ENCODE measurements at regions of chr19 and their contacts with region 1.

Region 1: GRCh38 chr19:47273313-47273977 is 1.2 kb upstream of the INAFM1 start:
- DNase-seq: peak; percentile 87 to 92 (median 89)
- H3K4me3 ChIP-seq: peak overlapping the region; percentile 89 to 100
- H3K4me3 Mint-ChIP-seq: peak overlapping the region; percentile 92 to 99 (median 97)
- H3K27ac ChIP-seq: peak overlapping the region; percentile 96
- H3K27ac Mint-ChIP-seq: peak overlapping the region; percentile 97 to 99 (median 99)
- H3K4me1 ChIP-seq: peaks cover 19% of the 10 kb centered on the region
- H3K4me1 Mint-ChIP-seq: peaks cover 15 to 33% (median 19%) of the 10 kb centered on the region in 4 donors
- H3K27me3 ChIP-seq: no peaks in the 10 kb centered on the region
- H3K27me3 Mint-ChIP-seq: no peaks in the 10 kb centered on the region

Region 2: GRCh38 chr19:46600384-46601317 is 672.8 kb before region 1 on chr19:
- CTCF ChIA-PET with region 1: no interaction called
- POLR2A ChIA-PET with region 1: interaction called, 11 read pairs
- intact Hi-C with region 1: no loop called
- DNase-seq: peak; percentile 97 to 99 (median 98)
- H3K4me3 ChIP-seq: peak overlapping the region; percentile 80 to 90
- H3K4me3 Mint-ChIP-seq: peak overlapping the region; percentile 98 to 99 (median 99)
- H3K27ac ChIP-seq: peak overlapping the region; percentile 97
- H3K27ac Mint-ChIP-seq: peak overlapping the region; percentile 100
- H3K4me1 ChIP-seq: peaks cover 36% of the 10 kb centered on the region
- H3K4me1 Mint-ChIP-seq: peaks cover 10 to 46% (median 30%) of the 10 kb centered on the region in 4 donors
- H3K27me3 ChIP-seq: no peaks in the 10 kb centered on the region
- H3K27me3 Mint-ChIP-seq: peaks cover 0 to 4% of the 10 kb centered on the region in 2 donors

Region 3: DNA sequence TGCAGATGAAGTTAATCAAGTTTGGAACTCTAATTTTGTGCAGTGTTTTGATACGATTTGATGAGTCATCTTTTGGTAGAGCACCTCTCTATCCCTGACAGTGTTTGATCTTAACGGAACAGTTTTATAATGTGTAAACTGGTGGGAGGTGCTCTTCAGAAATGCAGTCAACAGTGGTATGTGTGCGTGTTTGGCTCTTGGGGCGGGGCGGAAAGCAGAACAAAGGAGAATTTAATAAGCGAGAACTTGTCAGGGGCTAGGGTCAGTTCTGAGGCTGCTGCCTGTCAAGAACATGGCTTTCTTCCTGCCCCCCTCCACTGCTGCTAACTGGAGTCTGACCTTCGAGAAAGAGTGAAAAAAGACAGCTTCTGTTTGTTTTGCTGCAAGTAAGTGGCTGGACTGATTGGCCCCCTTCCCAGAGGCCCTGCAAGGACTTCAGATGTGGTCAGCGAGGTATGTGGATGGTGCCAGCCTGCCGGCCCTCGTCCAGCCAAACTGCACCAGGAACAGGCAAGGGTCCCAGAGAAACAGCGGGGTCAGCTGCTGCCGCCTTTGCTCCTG is 83.2 kb before region 1 on chr19:
- CTCF ChIA-PET with region 1: no interaction called
- POLR2A ChIA-PET with region 1: interaction called, 10 read pairs
- intact Hi-C with region 1: no loop called
- DNase-seq: peak; percentile 60 to 78 (median 64)
- H3K4me3 ChIP-seq: no peak overlapping the region
- H3K4me3 Mint-ChIP-seq: peak overlapping the region in 7 of 8 donors; percentile 5 to 81 (median 56)
- H3K27ac ChIP-seq: peak overlapping the region; percentile 47
- H3K27ac Mint-ChIP-seq: peak overlapping the region; percentile 62 to 94 (median 85)
- H3K4me1 ChIP-seq: peaks cover 72% of the 10 kb centered on the region
- H3K4me1 Mint-ChIP-seq: peaks cover 40 to 71% (median 48%) of the 10 kb centered on the region in 4 donors
- H3K27me3 ChIP-seq: no peaks in the 10 kb centered on the region
- H3K27me3 Mint-ChIP-seq: no peaks in the 10 kb centered on the region

Region 4: DNA sequence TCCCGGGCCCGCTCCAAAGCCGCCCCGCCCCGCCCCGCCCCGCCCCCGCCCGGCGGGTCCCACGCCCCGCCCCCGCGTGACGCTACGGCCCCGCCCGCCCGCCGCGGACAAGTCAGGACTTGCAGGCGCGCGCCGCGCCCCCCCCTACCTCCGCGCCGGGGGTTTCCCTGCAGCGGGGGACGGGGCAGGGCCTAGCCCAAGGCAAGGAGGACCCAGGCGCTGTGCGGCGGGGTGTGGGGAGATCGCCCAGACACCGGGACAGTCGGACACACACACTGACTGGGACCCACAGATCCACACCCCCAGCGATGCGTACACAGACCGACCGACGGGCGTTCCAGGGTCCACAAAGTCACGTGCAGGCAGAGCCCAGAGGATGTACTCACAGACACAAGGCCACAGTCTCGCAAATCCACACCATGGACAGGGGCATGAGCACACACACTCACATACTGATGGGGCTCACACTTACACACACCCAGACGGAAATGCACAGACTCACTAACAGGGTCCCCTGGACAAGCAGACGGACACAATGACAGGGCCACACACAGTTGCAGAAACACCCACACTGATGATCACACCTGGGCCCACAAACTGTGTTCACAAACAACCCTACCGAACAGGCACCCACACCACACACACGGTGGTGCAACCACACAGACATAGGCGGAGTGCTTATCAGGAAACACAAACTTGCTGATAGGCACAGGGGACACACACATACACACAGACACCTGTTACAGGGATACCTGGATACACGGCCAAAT is 42.0 kb before region 1 on chr19:
- CTCF ChIA-PET with region 1: interaction called, 4 read pairs
- POLR2A ChIA-PET with region 1: interaction called, 19 read pairs
- intact Hi-C with region 1: loop called (anchors 2 kb)
- DNase-seq: peak; percentile 88 to 96 (median 90)
- H3K4me3 ChIP-seq: peak overlapping the region in 1 of 2 donors; percentile 53
- H3K4me3 Mint-ChIP-seq: peak overlapping the region; percentile 73 to 88 (median 83)
- H3K27ac ChIP-seq: peak overlapping the region; percentile 76
- H3K27ac Mint-ChIP-seq: peak overlapping the region; percentile 71 to 97 (median 93)
- H3K4me1 ChIP-seq: peaks cover 51% of the 10 kb centered on the region
- H3K4me1 Mint-ChIP-seq: peaks cover 15 to 32% (median 22%) of the 10 kb centered on the region in 4 donors
- H3K27me3 ChIP-seq: no peaks in the 10 kb centered on the region
- H3K27me3 Mint-ChIP-seq: no peaks in the 10 kb centered on the region

Region 5: DNA sequence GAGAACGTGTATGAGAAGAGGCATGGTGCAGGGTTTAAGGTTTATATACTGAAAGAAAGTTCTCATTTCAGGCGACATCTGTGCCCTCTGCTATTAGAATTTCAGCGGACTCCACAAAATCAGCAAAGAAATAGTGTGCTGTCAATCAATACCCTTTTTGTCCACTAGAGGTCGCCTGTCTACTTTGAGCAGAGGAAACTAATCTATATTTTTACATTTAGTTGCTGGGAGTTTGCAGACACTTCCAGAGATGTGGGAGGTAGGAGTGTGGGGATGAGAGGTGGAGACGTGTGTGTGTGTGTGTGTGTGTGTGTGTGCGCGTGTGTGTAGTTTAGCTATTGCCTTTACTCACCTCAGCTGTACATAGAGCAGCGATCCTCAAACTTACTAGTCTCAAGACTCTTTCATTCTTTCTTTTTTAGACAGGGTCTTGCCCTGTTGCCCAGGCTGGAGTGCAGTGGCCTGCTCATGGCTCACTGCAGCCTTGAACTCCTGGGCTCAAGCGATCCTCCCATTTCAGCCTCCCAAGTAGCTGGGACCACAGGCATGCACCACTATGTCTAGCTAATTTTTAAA is 11.0 kb after region 1 on chr19:
- CTCF ChIA-PET with region 1: interaction called, 33 read pairs
- POLR2A ChIA-PET with region 1: interaction called, 5 read pairs
- intact Hi-C with region 1: no loop called
- DNase-seq: peak in 4 of 5 donors; percentile 54 to 69 (median 64)
- H3K4me3 ChIP-seq: no peak overlapping the region
- H3K4me3 Mint-ChIP-seq: no peak overlapping the region
- H3K27ac ChIP-seq: no peak overlapping the region
- H3K27ac Mint-ChIP-seq: no peak overlapping the region
- H3K4me1 ChIP-seq: peaks cover 10% of the 10 kb centered on the region
- H3K4me1 Mint-ChIP-seq: peaks cover 7 to 16% (median 12%) of the 10 kb centered on the region in 4 donors
- H3K27me3 ChIP-seq: no peaks in the 10 kb centered on the region
- H3K27me3 Mint-ChIP-seq: no peaks in the 10 kb centered on the region

Region 6: DNA sequence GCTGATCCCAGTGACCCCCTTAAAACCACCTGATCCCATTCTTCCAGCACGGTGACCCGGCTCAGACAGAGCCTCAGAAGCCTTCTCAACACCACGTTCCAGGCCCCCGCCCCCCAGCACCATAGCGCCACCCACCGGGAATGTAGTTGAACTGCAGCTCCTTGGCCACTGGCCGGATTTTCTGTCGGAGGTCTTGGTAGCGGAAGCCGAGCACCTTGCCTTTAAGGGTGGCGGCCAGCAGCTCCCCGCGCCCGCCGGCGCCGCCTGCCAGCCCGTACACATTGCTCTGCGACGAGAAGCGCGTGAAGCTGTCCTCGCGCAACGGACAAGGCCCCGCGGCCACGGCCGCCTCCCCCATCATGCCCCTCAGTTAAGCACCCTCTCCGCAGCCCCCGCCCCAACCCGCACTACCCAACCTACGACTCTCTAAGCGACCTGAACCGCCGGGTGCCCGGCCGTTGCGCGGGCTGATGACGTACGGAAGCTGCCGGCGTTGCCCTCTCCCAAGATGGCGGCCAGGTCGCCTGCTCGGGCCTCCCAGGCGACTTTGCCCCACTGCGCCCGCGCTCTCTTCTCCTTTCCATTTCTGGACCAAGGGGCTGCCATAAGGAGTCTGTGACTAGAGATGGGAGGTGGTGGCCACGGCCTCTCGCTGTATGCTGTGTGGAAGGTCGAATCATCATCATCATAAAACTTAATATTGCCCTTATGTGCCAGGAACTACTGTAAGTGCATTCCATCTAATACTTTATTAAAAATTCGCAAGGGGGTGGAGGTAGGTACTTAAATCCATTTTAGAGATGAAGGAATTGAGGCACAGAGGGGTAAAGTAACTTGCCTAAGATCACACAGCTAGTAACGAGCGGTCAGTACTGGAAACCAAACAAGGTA is 210.6 kb after region 1 on chr19 and contains the start of gene KPTN:
- CTCF ChIA-PET with region 1: no interaction called
- POLR2A ChIA-PET with region 1: interaction called, 10 read pairs
- intact Hi-C with region 1: no loop called
- DNase-seq: peak; percentile 87 to 92 (median 90)
- H3K4me3 ChIP-seq: peak within 1 kb of the TSS; percentile 44 to 72
- H3K4me3 Mint-ChIP-seq: peak within 1 kb of the TSS; percentile 91 to 100 (median 98)
- H3K27ac ChIP-seq: peak within 1 kb of the TSS; percentile 86
- H3K27ac Mint-ChIP-seq: peak within 1 kb of the TSS; percentile 96 to 100 (median 99)
- H3K4me1 ChIP-seq: peaks cover 21% of the 10 kb centered on the region
- H3K4me1 Mint-ChIP-seq: peaks cover 16 to 42% (median 22%) of the 10 kb centered on the region in 4 donors
- H3K27me3 ChIP-seq: no peaks in the 10 kb centered on the region
- H3K27me3 Mint-ChIP-seq: no peaks in the 10 kb centered on the region
- total RNA-seq, gene KPTN: 4.0 to 4.3 TPM

Region 7: DNA sequence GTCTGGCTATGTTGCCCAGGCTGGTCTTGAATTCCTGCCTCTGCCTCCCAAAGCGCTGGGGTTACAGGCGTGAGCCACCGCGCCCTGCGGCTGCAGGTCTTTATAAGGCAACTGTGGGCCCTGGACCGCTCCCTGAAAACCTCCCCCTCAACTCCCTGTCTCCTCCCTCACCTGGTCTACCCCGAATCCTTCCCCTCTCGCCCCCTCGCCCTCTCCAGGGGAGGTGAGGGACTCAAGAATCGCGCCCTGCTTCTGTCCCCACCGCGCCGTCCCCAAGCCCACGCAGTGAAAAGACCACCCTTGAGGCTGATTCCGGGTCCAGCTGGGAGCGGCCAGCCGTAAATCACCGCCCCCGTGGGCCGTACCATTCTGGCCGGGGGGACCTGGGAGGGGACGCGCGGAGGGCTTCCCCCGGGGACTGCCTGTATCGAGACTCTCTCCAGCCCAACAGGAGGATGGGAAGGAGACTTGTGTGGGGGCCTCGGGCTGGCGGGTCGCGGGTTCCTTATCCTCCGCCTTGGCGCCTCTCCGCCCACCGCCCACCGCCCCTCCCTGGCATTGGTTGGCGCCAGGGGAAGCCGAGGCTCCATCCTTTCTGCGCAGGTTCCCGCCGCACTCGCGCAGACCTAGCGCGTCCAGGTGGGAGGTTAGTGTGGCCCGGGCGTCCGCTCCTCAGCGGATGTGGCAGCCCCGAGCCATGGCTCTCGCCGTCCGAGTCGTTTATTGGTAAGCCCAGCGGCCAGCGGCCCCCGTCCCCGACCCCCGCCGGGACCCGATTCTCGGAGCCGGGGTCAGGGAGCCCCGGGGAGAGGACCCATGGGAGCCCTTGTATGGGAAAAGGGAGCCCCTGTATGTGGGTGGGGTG is 504.9 kb after region 1 on chr19 and contains the start of gene SELENOW:
- CTCF ChIA-PET with region 1: interaction called, 5 read pairs
- POLR2A ChIA-PET with region 1: no interaction called
- intact Hi-C with region 1: loop called (anchors 1 kb)
- DNase-seq: peak; percentile 73 to 87 (median 80)
- H3K4me3 ChIP-seq: peak within 1 kb of the TSS; percentile 55 to 99
- H3K4me3 Mint-ChIP-seq: peak within 1 kb of the TSS; percentile 91 to 98 (median 96)
- H3K27ac ChIP-seq: peak within 1 kb of the TSS; percentile 86
- H3K27ac Mint-ChIP-seq: peak within 1 kb of the TSS; percentile 74 to 97 (median 95)
- H3K4me1 ChIP-seq: peaks cover 17% of the 10 kb centered on the region
- H3K4me1 Mint-ChIP-seq: peaks cover 15 to 42% (median 27%) of the 10 kb centered on the region in 4 donors
- H3K27me3 ChIP-seq: no peaks in the 10 kb centered on the region
- H3K27me3 Mint-ChIP-seq: no peaks in the 10 kb centered on the region
- total RNA-seq, gene SELENOW: 116 to 122 TPM